Activated naive CD4-positive, alpha-beta T cell treated with anti-CD3 and anti-CD28 coated beads for 36 hours (primary cell): ENCODE measurements at regions of chr6 and their contacts with region 1.

Region 1: GRCh38 chr6:90008908-90009501 is 114.7 kb downstream of the GJA10 start:
- DNase-seq: peak; percentile 66
- H3K4me3 Mint-ChIP-seq: no peak overlapping the region
- H3K27ac Mint-ChIP-seq: peak overlapping the region; percentile 91
- H3K4me1 Mint-ChIP-seq: peaks cover 58% of the 10 kb centered on the region
- H3K27me3 Mint-ChIP-seq: no peaks in the 10 kb centered on the region

Region 2: GRCh38 chr6:89986650-89987074 is 22.3 kb before region 1 on chr6:
- CTCF ChIA-PET with region 1: no interaction called
- intact Hi-C with region 1: loop called (anchors 1 kb)
- DNase-seq: no peak
- H3K4me3 Mint-ChIP-seq: no peak overlapping the region
- H3K27ac Mint-ChIP-seq: peak overlapping the region; percentile 83
- H3K4me1 Mint-ChIP-seq: peaks cover 80% of the 10 kb centered on the region
- H3K27me3 Mint-ChIP-seq: no peaks in the 10 kb centered on the region

Region 3: DNA sequence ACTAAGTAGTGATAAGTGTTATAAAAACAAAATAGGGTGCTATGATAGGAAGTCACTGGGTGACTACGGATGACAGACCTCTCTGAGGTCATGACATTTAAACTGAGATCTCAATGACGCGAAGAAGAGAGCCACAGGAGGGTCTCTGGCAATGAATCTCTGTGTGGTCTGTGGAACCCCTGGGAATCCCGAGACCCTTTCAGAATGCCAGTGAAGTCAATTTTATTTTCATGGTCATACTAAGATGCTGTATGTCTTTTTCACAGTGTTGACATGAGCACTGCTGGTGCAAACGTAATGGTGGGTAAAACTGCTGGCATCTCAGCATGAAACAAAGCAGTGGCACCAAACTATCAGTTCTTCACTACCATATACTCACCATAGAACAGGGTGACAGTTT is 40.3 kb after region 1 on chr6:
- CTCF ChIA-PET with region 1: interaction called, 3 read pairs
- intact Hi-C with region 1: loop called (anchors 1 kb)
- DNase-seq: no peak
- H3K4me3 Mint-ChIP-seq: no peak overlapping the region
- H3K27ac Mint-ChIP-seq: peak overlapping the region; percentile 86
- H3K4me1 Mint-ChIP-seq: peaks cover 59% of the 10 kb centered on the region
- H3K27me3 Mint-ChIP-seq: no peaks in the 10 kb centered on the region

Region 4: GRCh38 chr6:90184334-90185298 is 175.6 kb after region 1 on chr6:
- CTCF ChIA-PET with region 1: interaction called, 3 read pairs
- intact Hi-C with region 1: loop called (anchors 2 kb)
- DNase-seq: no peak
- H3K4me3 Mint-ChIP-seq: peak overlapping the region; percentile 46
- H3K27ac Mint-ChIP-seq: peak overlapping the region; percentile 66
- H3K4me1 Mint-ChIP-seq: peaks cover 75% of the 10 kb centered on the region
- H3K27me3 Mint-ChIP-seq: no peaks in the 10 kb centered on the region

Region 5: GRCh38 chr6:90413867-90414266 is 404.9 kb after region 1 on chr6:
- CTCF ChIA-PET with region 1: no interaction called
- intact Hi-C with region 1: loop called (anchors 1 kb)
- DNase-seq: peak; percentile 96
- H3K4me3 Mint-ChIP-seq: peak overlapping the region; percentile 71
- H3K27ac Mint-ChIP-seq: peak overlapping the region; percentile 94
- H3K4me1 Mint-ChIP-seq: peaks cover 69% of the 10 kb centered on the region
- H3K27me3 Mint-ChIP-seq: no peaks in the 10 kb centered on the region

Region 6: GRCh38 chr6:90764001-90764400 is 755.0 kb after region 1 on chr6:
- CTCF ChIA-PET with region 1: no interaction called
- intact Hi-C with region 1: no loop called
- DNase-seq: no peak
- H3K4me3 Mint-ChIP-seq: no peak overlapping the region
- H3K27ac Mint-ChIP-seq: no peak overlapping the region
- H3K4me1 Mint-ChIP-seq: no peaks in the 10 kb centered on the region
- H3K27me3 Mint-ChIP-seq: peaks cover 10% of the 10 kb centered on the region